ENCODE measurements at regions of chr5 and their contacts with region 1.

Region 1: DNA sequence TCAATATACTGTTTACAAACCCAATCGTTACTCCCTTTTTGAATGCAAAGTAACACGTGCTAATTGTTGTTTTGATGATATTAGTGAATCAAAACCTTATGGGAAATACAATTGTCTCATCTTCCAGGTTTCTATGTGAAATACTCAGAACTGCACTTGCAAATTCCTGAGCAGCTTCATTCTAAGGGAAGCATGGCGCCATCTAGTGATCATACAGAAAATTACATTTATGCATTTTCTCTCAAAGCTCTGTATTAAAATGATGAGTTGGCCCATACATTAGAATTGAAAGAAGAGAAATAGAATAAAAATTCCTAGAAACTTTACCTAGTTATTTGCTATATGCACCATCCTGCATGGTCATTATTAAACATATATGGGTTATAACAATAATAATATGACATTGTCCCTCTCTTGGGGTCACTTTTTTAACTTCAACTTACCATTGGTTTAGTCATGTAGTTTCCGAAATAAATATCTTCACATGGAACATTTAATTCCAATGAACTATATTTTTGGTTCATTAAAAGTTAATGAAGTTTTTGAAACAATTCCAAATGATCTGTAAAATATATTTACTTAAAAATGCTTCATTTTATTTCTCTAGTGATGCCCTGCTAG is 220.0 kb downstream of the PDE4D start:
- DNase-seq: peak in 1 of 2 experiments; percentile 61
- H3K4me3 ChIP-seq: no peak overlapping the region
- H3K27ac ChIP-seq: no peak overlapping the region
- H3K4me1 ChIP-seq: 0 out of 2 replicates have a peak, but pooled peaks cover 6% of the 10 kb centered on the region
- H3K27me3 ChIP-seq: no peaks in the 10 kb centered on the region
- CTCF ChIP-seq: peak; percentile 94

Region 2: DNA sequence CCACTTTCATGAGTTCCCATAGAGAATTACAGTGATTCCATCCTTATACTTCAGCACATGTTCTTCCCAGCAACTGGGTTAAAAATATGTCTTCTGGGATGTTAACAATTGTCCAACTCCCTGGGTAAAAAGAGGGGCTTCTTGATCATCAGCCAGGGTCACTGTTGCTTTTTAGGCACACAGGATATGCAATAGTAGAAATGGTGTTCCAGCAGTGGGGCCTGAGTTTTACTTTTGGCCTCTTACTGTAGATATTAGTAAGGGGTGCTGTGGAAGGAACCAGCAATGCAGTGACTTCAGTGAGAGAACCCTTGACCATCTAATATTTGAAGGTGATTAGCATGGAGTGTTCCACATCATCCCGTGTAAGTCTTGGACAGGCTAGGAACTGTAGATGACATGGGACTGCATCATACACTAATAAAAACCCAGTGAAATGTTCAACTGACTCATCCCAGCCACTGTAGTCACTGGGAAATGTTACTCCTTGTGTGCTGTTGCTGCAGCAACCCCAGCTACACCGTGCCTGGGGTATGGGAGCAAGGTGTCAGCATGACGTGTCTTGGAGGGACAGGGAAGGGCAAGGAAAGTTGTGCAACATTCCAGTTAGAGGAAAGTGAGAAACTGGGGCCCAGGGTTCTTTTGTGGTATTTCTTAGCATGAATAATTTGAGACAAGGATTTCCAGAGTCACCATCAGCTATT is 479.8 kb before region 1 on chr5:
- CTCF ChIA-PET with region 1: no interaction called
- POLR2A ChIA-PET with region 1: no interaction called
- intact Hi-C with region 1: loop called (anchors 5 kb)
- DNase-seq: peak; percentile 83 to 90
- H3K4me3 ChIP-seq: no peak overlapping the region
- H3K27ac ChIP-seq: peak overlapping the region; percentile 72
- H3K4me1 ChIP-seq: peaks cover 12% of the 10 kb centered on the region
- H3K27me3 ChIP-seq: no peaks in the 10 kb centered on the region
- CTCF ChIP-seq: no peak

Region 3: DNA sequence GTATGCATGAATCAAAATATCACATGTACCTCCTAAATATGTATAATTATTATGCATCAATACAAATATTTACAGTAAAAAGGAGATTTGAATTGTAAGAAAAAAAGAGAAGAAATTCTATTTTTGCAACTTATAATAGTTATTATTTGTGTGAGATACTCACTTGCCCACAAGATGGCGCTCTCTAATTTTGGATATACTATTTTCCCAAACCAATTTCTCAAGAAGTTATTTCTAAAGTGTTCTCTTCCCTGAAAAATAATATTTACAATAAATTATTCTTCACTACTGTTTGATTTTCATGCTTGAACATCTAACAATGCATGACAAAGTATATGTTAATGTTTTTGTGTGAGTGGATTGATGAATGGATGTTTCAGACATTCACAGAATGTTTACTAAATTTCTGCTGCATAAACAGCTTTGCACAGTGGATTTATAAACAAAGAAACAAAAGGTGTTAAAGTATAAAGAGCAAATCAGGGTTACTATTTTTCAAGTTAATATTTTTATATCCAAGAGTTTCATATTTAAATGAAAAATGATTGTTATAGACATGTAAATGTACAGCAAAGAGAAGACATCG is 283.4 kb before region 1 on chr5:
- CTCF ChIA-PET with region 1: no interaction called
- POLR2A ChIA-PET with region 1: no interaction called
- intact Hi-C with region 1: loop called (anchors 2 kb)
- DNase-seq: no peak
- H3K4me3 ChIP-seq: no peak overlapping the region
- H3K27ac ChIP-seq: no peak overlapping the region
- H3K4me1 ChIP-seq: no peaks in the 10 kb centered on the region
- H3K27me3 ChIP-seq: no peaks in the 10 kb centered on the region
- CTCF ChIP-seq: peak; percentile 88

Region 4: DNA sequence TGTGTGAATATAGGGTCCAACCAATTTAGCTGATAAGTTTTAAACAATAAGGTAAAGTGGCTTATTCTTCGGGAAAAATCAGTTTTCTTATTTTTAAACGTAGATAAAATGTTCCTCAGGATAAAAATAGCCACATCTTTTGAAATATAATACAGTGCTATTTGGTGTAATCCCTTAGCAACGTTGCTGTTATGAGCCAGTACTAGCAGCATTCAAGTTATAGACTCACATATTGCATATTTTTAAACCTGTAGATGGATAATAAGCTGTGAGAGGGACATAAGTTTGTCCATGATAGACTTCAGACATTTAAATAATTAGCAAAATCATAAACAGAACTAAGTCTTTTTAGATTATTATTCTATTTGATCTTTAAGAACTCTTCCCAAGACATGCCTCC is 213.7 kb after region 1 on chr5:
- CTCF ChIA-PET with region 1: no interaction called
- POLR2A ChIA-PET with region 1: no interaction called
- intact Hi-C with region 1: no loop called
- DNase-seq: no peak
- H3K4me3 ChIP-seq: no peak overlapping the region
- H3K27ac ChIP-seq: no peak overlapping the region
- H3K4me1 ChIP-seq: no peaks in the 10 kb centered on the region
- H3K27me3 ChIP-seq: no peaks in the 10 kb centered on the region
- CTCF ChIP-seq: no peak

Measured in PC-9 (cell line).